Activated CD4-positive, alpha-beta memory T cell treated with anti-CD3 and anti-CD28 coated beads for 36 hours (primary cell): ENCODE measurements at regions of chr6 and their contacts with region 1.

Region 1: GRCh38 chr6:119147101-119148053 is 68.9 kb upstream of the FAM184A start:
- DNase-seq: peak; percentile 75
- H3K4me3 Mint-ChIP-seq: no peak overlapping the region
- H3K27ac Mint-ChIP-seq: peak overlapping the region; percentile 26
- H3K4me1 Mint-ChIP-seq: peaks cover 35% of the 10 kb centered on the region
- H3K27me3 Mint-ChIP-seq: peaks cover 2% of the 10 kb centered on the region

Region 2: GRCh38 chr6:118843685-118844390 is 303.5 kb before region 1 on chr6:
- CTCF ChIA-PET with region 1: no interaction called
- POLR2A ChIA-PET with region 1: no interaction called
- intact Hi-C with region 1: loop called (anchors 1 kb)
- DNase-seq: no peak
- H3K4me3 Mint-ChIP-seq: peak overlapping the region; percentile 33
- H3K27ac Mint-ChIP-seq: peak overlapping the region; percentile 34
- H3K4me1 Mint-ChIP-seq: peaks cover 32% of the 10 kb centered on the region
- H3K27me3 Mint-ChIP-seq: no peaks in the 10 kb centered on the region

Region 3: DNA sequence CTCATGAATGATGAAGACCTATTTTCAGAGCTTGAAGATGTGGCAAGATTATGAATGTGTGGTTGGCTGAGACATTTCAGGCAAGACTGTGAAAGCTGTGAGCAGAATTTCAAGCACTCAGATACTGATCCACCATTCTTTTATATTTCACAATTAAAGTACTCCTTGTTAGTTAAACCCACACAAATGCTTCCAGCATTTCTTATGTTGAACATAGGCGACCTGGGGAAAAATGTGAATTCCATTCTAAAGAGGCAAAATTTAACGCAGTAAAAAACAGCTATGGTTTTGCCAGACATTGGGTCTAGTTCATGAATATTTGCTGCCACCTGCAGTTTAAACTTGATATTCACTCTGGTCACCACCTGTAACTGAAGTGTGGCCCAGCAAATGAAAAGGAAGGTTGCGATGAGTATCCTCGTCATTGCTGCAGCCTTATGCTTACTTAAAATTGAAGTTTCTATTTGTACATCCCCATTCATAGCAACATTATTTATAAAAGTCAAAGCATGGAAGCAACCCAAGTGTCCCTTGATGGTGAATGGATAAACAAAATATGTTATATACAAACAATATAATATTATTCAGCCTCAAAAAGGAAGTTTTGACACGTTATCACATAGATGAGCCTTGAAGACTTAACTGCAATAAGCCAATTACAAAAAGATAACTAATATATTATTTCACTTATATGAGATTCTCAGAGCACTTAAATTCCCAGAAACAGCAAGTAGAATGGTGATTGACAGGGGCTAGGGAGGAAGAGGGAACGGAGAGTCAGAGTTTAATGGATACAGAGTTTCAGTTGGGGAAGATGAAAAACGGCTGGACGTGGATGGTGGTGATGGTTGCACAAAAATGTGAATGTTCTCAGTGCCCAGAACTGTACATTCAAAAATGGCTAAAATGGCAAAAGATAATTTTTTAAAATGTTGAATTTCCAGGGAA is 36.5 kb before region 1 on chr6:
- CTCF ChIA-PET with region 1: no interaction called
- POLR2A ChIA-PET with region 1: no interaction called
- intact Hi-C with region 1: no loop called
- DNase-seq: peak; percentile 32
- H3K4me3 Mint-ChIP-seq: no peak overlapping the region
- H3K27ac Mint-ChIP-seq: no peak overlapping the region
- H3K4me1 Mint-ChIP-seq: peaks cover 9% of the 10 kb centered on the region
- H3K27me3 Mint-ChIP-seq: no peaks in the 10 kb centered on the region

Region 4: GRCh38 chr6:119129148-119129967 is 18.0 kb before region 1 on chr6:
- CTCF ChIA-PET with region 1: interaction called, 23 read pairs
- POLR2A ChIA-PET with region 1: no interaction called
- intact Hi-C with region 1: loop called (anchors 1 kb)
- DNase-seq: no peak
- H3K4me3 Mint-ChIP-seq: no peak overlapping the region
- H3K27ac Mint-ChIP-seq: no peak overlapping the region
- H3K4me1 Mint-ChIP-seq: peaks cover 2% of the 10 kb centered on the region
- H3K27me3 Mint-ChIP-seq: no peaks in the 10 kb centered on the region

Region 5: DNA sequence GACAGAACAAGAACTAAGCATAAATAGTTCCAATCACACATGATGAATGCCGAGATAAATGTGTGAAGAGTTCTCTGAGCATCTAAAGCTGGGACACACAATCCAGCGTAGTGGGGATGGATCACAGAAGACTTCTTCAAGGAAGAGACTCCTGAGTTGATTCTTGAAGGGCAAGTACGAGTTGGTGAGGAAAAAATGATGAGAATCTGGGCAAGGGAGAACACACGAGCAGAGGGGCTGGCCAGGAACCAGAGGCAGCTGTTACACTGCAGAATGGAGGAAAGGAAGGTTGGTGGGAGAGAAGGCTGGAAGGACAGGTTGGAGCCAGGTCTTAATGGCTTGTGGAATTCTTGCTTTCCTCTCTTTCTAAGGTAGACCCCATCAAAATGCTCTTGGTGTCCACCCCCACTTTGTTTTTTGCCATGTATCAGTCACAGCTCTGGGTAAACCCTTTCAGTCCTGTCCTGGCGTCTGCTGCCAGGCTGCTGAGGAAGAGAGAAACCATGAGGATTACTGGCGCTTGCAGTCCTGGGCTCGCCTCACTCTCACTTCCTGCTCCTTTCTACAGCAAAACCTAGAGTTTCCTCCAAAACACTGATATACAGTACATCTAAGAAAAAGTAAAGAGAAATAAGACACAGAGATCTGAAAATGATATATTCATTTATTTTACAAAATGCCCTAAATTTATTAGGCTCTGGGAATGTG is 58.7 kb after region 1 on chr6:
- CTCF ChIA-PET with region 1: no interaction called
- POLR2A ChIA-PET with region 1: no interaction called
- intact Hi-C with region 1: no loop called
- DNase-seq: no peak
- H3K4me3 Mint-ChIP-seq: no peak overlapping the region
- H3K27ac Mint-ChIP-seq: no peak overlapping the region
- H3K4me1 Mint-ChIP-seq: peaks cover 3% of the 10 kb centered on the region
- H3K27me3 Mint-ChIP-seq: no peaks in the 10 kb centered on the region

Region 6: GRCh38 chr6:119226089-119226488 is 78.7 kb after region 1 on chr6:
- CTCF ChIA-PET with region 1: no interaction called
- POLR2A ChIA-PET with region 1: no interaction called
- intact Hi-C with region 1: no loop called
- DNase-seq: no peak
- H3K4me3 Mint-ChIP-seq: no peak overlapping the region
- H3K27ac Mint-ChIP-seq: no peak overlapping the region
- H3K4me1 Mint-ChIP-seq: no peaks in the 10 kb centered on the region
- H3K27me3 Mint-ChIP-seq: no peaks in the 10 kb centered on the region

Region 7: GRCh38 chr6:119313937-119314884 is 166.8 kb after region 1 on chr6:
- CTCF ChIA-PET with region 1: interaction called, 5 read pairs
- POLR2A ChIA-PET with region 1: no interaction called
- intact Hi-C with region 1: loop called (anchors 1 kb)
- DNase-seq: peak; percentile 61
- H3K4me3 Mint-ChIP-seq: peak overlapping the region; percentile 22
- H3K27ac Mint-ChIP-seq: peak overlapping the region; percentile 89
- H3K4me1 Mint-ChIP-seq: peaks cover 56% of the 10 kb centered on the region
- H3K27me3 Mint-ChIP-seq: no peaks in the 10 kb centered on the region

Region 8: GRCh38 chr6:119533603-119534279 is 386.4 kb after region 1 on chr6:
- CTCF ChIA-PET with region 1: no interaction called
- POLR2A ChIA-PET with region 1: no interaction called
- intact Hi-C with region 1: loop called (anchors 10 kb)
- DNase-seq: no peak
- H3K4me3 Mint-ChIP-seq: no peak overlapping the region
- H3K27ac Mint-ChIP-seq: no peak overlapping the region
- H3K4me1 Mint-ChIP-seq: peaks cover 8% of the 10 kb centered on the region
- H3K27me3 Mint-ChIP-seq: peaks cover 7% of the 10 kb centered on the region

Region 9: DNA sequence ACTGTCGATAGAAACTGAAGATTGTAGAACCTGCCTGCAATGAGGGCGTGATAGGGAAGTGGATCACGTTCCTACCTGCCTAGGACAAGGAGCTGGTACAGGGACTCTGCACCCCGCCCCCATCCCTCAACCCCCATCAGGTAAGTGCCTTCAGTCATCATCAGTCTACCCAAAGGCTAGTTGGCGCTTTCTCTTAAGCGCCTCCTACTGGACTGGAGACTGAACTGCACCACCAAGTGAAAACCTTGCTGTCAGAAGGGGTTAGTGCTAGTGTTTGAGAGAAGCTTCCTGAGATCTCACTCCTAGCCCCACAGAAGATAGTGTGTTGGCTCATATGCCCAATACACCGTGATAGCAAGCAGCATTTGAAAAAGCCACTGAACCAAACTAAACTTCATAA is 908.7 kb after region 1 on chr6:
- CTCF ChIA-PET with region 1: interaction called, 3 read pairs
- POLR2A ChIA-PET with region 1: no interaction called
- intact Hi-C with region 1: loop called (anchors 2 kb)
- DNase-seq: peak; percentile 18
- H3K4me3 Mint-ChIP-seq: no peak overlapping the region
- H3K27ac Mint-ChIP-seq: no peak overlapping the region
- H3K4me1 Mint-ChIP-seq: no peaks in the 10 kb centered on the region
- H3K27me3 Mint-ChIP-seq: no peaks in the 10 kb centered on the region